ENCODE measurements at regions of chr6 and their contacts with region 1.

Region 1: DNA sequence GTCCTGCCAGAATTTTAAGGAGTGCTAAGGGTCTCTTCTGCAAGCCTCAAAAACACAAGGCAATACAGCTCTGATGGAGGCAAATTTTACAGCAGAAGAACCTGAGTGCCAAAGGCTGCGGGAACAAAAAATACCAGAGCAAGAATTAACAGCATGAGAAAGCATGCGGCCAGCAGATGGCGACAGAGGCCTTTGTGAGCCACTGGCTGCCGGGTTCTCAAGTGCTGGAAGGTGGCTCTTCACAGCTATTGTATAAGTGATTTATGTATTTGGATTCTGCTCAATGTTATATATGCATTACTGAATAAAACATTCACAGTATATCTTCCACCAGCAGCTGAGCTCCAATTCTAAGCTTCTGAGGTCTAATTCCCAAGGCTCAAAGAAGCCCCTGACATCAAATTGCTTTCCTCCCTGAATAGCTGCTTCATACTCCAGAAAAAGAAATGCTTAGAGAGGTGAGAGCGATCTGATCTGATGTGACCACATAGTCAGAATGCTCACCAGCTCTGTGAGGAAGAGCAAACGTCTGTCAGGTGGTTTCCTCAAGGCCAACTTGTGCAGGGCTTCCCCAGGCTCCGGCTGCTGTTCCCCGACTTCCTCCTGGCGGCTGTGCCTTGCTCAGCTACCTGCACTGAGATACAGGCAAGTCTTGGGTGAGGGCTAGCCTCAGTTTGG is 58.6 kb downstream of the PPP1R3G start:
- DNase-seq: peak; percentile 79 to 90
- ATAC-seq: peak; percentile 64 to 84 (median 70)
- H3K4me3 ChIP-seq: no peak overlapping the region
- H3K4me3 Mint-ChIP-seq: no peak overlapping the region
- H3K27ac ChIP-seq: no peak overlapping the region
- H3K27ac Mint-ChIP-seq: no peak overlapping the region
- H3K4me1 ChIP-seq: no peaks in the 10 kb centered on the region
- H3K4me1 Mint-ChIP-seq: no peaks in the 10 kb centered on the region
- H3K27me3 ChIP-seq: no peaks in the 10 kb centered on the region
- H3K27me3 Mint-ChIP-seq: no peaks in the 10 kb centered on the region
- CTCF ChIP-seq: peak; percentile 99

Region 2: DNA sequence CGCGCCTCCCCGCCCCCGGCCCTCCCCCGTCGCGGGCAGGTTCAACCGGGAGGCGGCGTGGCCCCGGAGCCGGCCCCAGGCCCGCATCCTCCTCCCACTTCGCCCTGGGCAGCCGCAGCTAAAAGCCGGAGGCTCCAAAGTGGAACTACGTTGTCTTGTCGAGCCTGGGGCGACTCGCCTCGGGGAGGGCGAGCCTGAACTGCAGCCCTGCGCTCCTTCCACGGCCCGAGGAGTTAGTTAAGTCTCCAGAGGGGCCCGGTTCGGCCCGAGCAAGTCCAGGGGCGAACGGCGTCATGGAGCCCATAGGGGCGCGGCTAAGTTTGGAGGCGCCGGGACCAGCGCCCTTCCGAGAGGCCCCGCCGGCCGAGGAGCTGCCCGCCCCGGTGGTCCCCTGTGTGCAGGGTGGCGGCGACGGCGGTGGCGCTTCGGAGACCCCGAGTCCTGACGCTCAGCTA is 58.6 kb before region 1 on chr6 and contains the start of gene PPP1R3G:
- intact Hi-C with region 1: no loop called
- DNase-seq: no peak
- ATAC-seq: no peak
- H3K4me3 ChIP-seq: peak within 1 kb of the TSS; percentile 17
- H3K4me3 Mint-ChIP-seq: no peak within 1 kb of the TSS
- H3K27ac ChIP-seq: no peak within 1 kb of the TSS
- H3K27ac Mint-ChIP-seq: no peak within 1 kb of the TSS
- H3K4me1 ChIP-seq: peaks cover 12% of the 10 kb centered on the region
- H3K4me1 Mint-ChIP-seq: no peaks in the 10 kb centered on the region
- H3K27me3 ChIP-seq: peaks cover 4% of the 10 kb centered on the region
- H3K27me3 Mint-ChIP-seq: peaks cover 26 to 34% of the 10 kb centered on the region in 2 donors
- CTCF ChIP-seq: no peak
- total RNA-seq, gene PPP1R3G: 0.07 TPM in 1 of 3 donors, not detected in the others

Region 3: GRCh38 chr6:5302995-5303622 is 159.3 kb after region 1 on chr6:
- intact Hi-C with region 1: loop called (anchors 1 kb)
- DNase-seq: peak in 1 of 2 donors; percentile 81
- ATAC-seq: peak in 2 of 3 donors; percentile 63 to 74
- H3K4me3 ChIP-seq: no peak overlapping the region
- H3K4me3 Mint-ChIP-seq: no peak overlapping the region
- H3K27ac ChIP-seq: no peak overlapping the region
- H3K27ac Mint-ChIP-seq: peak overlapping the region in 1 of 2 donors; percentile 0
- H3K4me1 ChIP-seq: peaks cover 16% of the 10 kb centered on the region
- H3K4me1 Mint-ChIP-seq: peaks cover 25 to 41% of the 10 kb centered on the region in 2 donors
- H3K27me3 ChIP-seq: no peaks in the 10 kb centered on the region
- H3K27me3 Mint-ChIP-seq: no peaks in the 10 kb centered on the region
- CTCF ChIP-seq: no peak

Region 4: DNA sequence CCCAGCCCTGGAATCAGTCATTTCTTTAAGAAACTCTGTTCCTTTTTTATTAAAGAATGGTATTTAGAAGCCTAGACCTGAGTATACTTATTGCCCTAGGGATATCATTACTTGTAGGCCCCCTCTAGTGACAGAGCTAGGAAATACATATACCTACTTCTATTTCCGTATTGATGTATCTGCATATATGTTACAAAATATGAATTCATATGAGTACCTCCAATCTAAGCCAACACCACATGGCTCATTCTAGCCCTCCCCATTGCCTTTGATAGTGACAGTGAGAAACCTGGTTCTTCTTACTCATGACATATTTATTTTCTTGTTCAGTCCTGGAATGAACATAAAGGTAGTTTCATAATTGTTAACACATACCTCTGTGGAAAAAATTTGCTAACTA is 254.8 kb after region 1 on chr6:
- intact Hi-C with region 1: loop called (anchors 1 kb)
- DNase-seq: peak in 1 of 2 donors; percentile 62
- ATAC-seq: peak; percentile 63 to 74 (median 68)
- H3K4me3 ChIP-seq: no peak overlapping the region
- H3K4me3 Mint-ChIP-seq: no peak overlapping the region
- H3K27ac ChIP-seq: no peak overlapping the region
- H3K27ac Mint-ChIP-seq: no peak overlapping the region
- H3K4me1 ChIP-seq: no peaks in the 10 kb centered on the region
- H3K4me1 Mint-ChIP-seq: peaks cover 9 to 11% of the 10 kb centered on the region in 2 donors
- H3K27me3 ChIP-seq: no peaks in the 10 kb centered on the region
- H3K27me3 Mint-ChIP-seq: no peaks in the 10 kb centered on the region
- CTCF ChIP-seq: peak; percentile 52

Region 5: GRCh38 chr6:6547110-6547879 is 1403.5 kb after region 1 on chr6:
- intact Hi-C with region 1: loop called (anchors 1 kb)
- DNase-seq: peak; percentile 72 to 92
- ATAC-seq: peak; percentile 93 to 95 (median 93)
- H3K4me3 ChIP-seq: peak overlapping the region; percentile 19
- H3K4me3 Mint-ChIP-seq: peak overlapping the region; percentile 70
- H3K27ac ChIP-seq: no peak overlapping the region
- H3K27ac Mint-ChIP-seq: no peak overlapping the region
- H3K4me1 ChIP-seq: peaks cover 17% of the 10 kb centered on the region
- H3K4me1 Mint-ChIP-seq: peaks cover 13 to 19% of the 10 kb centered on the region in 2 donors
- H3K27me3 ChIP-seq: peaks cover 25% of the 10 kb centered on the region
- H3K27me3 Mint-ChIP-seq: peaks cover 34 to 68% of the 10 kb centered on the region in 2 donors
- CTCF ChIP-seq: peak; percentile 85